OCI-LY7 (cell line): ENCODE measurements at regions of chr12 and their contacts with region 1.

Region 1: DNA sequence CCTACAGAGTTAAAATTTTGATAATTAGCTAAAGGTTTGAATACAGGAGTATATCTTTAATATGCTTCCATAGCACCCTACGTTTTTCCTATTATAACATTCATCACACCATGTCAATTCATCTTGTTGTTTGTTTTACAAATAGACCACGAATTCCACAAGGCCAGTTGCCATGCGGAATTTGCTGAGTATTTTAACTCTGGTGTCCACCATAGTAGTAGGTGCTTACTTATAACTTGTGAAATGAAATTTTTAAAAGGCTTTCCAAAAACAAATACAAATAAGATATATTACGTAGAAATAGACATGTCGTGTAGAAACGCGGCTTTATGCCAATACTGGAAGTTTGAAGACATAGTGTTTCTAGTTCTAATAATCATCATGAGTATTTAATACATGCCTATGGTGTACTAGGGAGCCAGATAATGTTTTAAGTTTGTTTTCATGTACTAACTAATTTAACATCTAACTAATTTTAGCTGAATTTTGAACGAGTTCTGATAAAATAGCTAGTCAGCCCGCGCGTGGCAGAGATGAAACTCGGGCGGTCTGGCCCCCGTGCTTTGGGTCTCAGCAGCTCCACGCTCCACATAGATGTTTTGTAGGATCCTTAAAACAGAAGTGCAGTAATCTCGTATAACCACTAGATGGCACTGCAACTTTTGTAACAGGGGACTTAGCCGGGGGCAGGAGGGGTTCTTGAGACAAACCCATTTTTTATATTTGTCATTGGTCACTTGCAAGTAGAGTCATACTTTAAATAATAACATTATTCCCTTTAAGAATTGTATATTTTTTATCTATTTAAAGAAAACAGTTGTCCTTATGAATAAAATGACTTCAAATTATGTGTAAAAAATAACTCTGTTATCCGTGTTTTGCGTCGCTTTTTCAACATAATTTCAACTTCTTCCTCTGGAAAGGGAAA is 10.2 kb downstream of the CD69 start:
- DNase-seq: peak; percentile 86
- H3K4me3 ChIP-seq: peak overlapping the region; percentile 26
- H3K27ac ChIP-seq: no peak overlapping the region
- H3K4me1 ChIP-seq: peaks cover 39% of the 10 kb centered on the region
- CTCF ChIP-seq: peak; percentile 80

Region 2: DNA sequence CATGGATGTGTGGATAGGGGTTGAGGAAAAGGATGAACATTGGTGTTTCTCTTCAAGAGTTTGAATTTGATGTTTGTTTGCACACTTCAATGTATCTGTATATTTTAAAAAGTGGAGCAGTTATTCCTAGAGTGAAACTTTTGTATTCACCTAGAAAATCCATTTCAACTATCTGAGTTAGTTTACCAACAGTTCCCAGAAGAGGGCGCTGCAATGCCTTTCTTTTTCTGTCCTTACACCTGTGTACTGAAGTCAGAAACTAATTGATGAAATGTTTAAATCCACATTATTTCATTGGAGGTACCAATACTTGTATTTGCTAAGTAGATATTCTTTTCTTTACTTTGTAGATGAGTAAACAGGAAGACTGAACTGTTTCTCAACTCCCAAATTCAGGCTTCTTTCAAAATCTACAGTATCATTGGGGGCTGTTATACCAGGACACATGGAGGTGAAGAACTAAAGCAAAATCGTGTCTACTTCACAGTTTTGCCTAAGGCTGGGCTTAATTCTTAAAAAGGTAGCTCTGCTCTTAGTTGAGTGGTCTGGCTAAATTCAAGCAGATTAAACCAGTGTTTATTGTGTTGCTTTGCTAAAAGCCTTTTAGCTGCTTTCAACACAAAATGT is 116.2 kb before region 1 on chr12:
- CTCF ChIA-PET with region 1: no interaction called
- POLR2A ChIA-PET with region 1: interaction called, 3 read pairs
- intact Hi-C with region 1: loop called (anchors 1 kb)
- DNase-seq: peak; percentile 83
- H3K4me3 ChIP-seq: no peak overlapping the region
- H3K27ac ChIP-seq: peak overlapping the region; percentile 22
- H3K4me1 ChIP-seq: peaks cover 32% of the 10 kb centered on the region
- CTCF ChIP-seq: peak; percentile 100

Region 3: DNA sequence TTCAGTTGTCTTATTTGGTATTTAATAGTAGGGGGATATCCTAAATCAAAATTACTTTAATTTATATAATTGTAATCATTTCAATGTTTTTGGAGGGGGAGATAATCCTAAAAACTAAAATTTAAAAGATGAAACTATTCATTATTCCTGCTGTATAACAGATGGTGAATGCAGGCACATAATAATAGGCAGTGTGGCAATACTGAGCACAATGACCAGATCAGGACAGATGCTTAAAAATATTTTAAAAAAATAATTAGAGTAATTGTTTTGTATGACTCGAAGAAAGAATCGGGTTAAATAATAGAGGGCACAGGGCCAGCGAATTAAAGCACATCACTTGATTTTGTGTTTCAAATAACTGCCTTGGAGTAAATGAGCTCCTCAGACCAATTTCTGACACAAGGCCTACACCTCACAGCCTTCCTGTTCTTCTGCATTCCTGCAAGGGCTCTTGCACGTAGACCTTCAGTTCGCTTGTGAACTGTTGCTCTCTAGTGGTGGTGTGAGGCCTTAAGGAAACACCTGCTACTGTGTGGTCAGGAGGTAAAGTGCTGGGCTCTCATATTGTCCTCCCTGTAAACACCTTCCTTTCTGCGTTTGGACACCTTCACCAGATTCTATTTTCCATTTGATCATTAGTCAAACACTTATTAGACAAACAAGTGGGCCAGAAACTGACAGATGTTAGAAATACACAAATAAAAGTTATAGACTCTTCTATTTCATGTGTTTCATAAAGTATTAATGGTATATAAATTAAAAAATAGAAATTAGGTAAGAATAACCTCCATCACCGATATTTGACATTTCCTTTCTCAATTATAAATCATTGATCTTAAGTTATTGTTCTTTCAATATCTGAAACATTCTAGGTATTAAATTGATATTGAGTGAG is 47.4 kb after region 1 on chr12:
- CTCF ChIA-PET with region 1: interaction called, 65 read pairs
- POLR2A ChIA-PET with region 1: interaction called, 23 read pairs
- intact Hi-C with region 1: loop called (anchors 1 kb)
- DNase-seq: peak; percentile 90
- H3K4me3 ChIP-seq: no peak overlapping the region
- H3K27ac ChIP-seq: no peak overlapping the region
- H3K4me1 ChIP-seq: peaks cover 26% of the 10 kb centered on the region
- CTCF ChIP-seq: peak; percentile 91

Region 4: DNA sequence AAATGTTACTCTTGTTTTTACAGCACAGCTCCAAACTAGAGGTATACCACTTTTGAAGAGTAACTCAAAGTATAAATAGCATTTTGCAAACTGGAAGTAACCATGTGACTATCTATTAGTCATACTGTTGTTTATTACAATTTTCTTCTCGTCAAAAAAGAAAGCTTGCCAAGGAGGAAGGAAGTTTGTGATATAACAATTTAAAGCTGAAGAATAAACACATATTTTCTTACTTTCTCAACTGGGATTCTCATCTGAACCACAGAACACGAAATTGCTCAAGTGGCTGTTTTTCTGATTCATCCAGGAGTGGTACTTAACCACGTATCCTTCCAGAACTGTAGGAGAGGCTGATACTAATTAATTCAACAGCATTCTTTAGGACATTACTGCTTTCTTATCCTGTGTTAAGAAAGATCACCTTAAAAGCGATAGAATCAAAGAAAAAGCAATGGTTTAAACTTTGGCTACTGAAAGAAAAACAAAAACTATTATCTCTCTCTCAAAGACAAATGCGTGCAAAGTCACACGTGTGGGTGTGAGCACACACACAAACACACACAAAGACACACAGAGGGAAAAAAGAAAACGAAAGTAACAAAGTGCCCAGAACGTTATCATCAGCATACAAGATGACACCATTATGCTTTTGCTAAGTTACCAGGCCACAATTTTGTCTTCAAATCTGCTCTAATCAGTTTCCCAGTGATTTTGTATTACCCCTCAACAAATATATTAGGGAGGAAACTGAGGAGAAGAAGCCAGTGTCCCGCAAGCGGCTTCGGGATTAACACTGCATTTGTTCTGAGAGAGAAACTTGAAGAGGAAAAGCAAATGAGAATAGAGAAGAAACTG is 119.0 kb after region 1 on chr12 and contains the start of gene CLEC2B:
- CTCF ChIA-PET with region 1: no interaction called
- POLR2A ChIA-PET with region 1: interaction called, 3 read pairs
- intact Hi-C with region 1: loop called (anchors 5 kb)
- DNase-seq: peak; percentile 44
- H3K4me3 ChIP-seq: peak within 1 kb of the TSS; percentile 70
- H3K27ac ChIP-seq: peak within 1 kb of the TSS; percentile 42
- H3K4me1 ChIP-seq: peaks cover 38% of the 10 kb centered on the region
- CTCF ChIP-seq: no peak
- total RNA-seq, gene CLEC2B: 2.3 and 3.1 TPM in 2 replicates

Region 5: DNA sequence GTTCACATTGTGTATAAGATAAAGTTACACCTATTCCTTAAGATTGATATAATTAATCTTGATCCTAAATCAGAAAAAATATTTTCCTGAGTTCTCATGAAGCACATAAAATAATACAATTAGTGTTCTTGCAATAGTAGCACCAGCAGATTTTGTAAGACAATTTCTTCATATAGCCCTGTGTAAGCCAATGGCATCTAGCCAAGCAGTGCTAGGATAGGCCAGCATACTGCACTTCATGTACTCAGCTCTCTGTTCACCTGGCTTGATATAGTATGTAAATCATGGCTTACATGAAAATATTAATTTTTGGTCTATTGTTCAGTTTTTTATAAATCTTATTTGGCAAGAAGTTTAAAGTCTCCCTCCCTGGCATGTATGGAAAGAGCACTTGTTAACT is 132.6 kb after region 1 on chr12:
- CTCF ChIA-PET with region 1: no interaction called
- POLR2A ChIA-PET with region 1: no interaction called
- intact Hi-C with region 1: no loop called
- DNase-seq: no peak
- H3K4me3 ChIP-seq: no peak overlapping the region
- H3K27ac ChIP-seq: no peak overlapping the region
- H3K4me1 ChIP-seq: peaks cover 5% of the 10 kb centered on the region
- CTCF ChIP-seq: no peak

Region 6: GRCh38 chr12:9925708-9926393 is 175.3 kb after region 1 on chr12:
- CTCF ChIA-PET with region 1: no interaction called
- POLR2A ChIA-PET with region 1: interaction called, 5 read pairs
- intact Hi-C with region 1: loop called (anchors 1 kb)
- DNase-seq: peak; percentile 56
- H3K4me3 ChIP-seq: no peak overlapping the region
- H3K27ac ChIP-seq: no peak overlapping the region
- H3K4me1 ChIP-seq: peaks cover 11% of the 10 kb centered on the region
- CTCF ChIP-seq: peak; percentile 87